Esophagus squamous epithelium (tissue), 5 donors: ENCODE measurements at regions of chr13 and their contacts with region 1.

Region 1: GRCh38 chr13:110412132-110412914 is 105.2 kb downstream of the COL4A2 start:
- DNase-seq: no peak
- H3K4me3 ChIP-seq: no peak overlapping the region
- H3K27ac ChIP-seq: peak overlapping the region; percentile 59 to 88 (median 86)
- H3K4me1 ChIP-seq: peaks cover 0 to 68% (median 44%) of the 10 kb centered on the region in 3 donors
- H3K27me3 ChIP-seq: no peaks in the 10 kb centered on the region
- CTCF ChIP-seq: peak; percentile 56 to 91 (median 84)
- POLR2A ChIP-seq: no peak

Region 2: GRCh38 chr13:110220471-110220870 is 191.9 kb before region 1 on chr13:
- intact Hi-C with region 1: loop called (anchors 5 kb)
- DNase-seq: no peak
- H3K4me3 ChIP-seq: no peak overlapping the region
- H3K27ac ChIP-seq: peak overlapping the region in 3 of 4 donors; percentile 82 to 90 (median 84)
- H3K4me1 ChIP-seq: peaks cover 6 to 50% (median 24%) of the 10 kb centered on the region in 3 donors
- H3K27me3 ChIP-seq: no peaks in the 10 kb centered on the region
- CTCF ChIP-seq: no peak
- POLR2A ChIP-seq: no peak

Region 3: GRCh38 chr13:110485603-110486002 is 73.3 kb after region 1 on chr13:
- intact Hi-C with region 1: no loop called
- DNase-seq: no peak
- H3K4me3 ChIP-seq: no peak overlapping the region
- H3K27ac ChIP-seq: no peak overlapping the region
- H3K4me1 ChIP-seq: no peaks in the 10 kb centered on the region
- H3K27me3 ChIP-seq: no peaks in the 10 kb centered on the region
- CTCF ChIP-seq: no peak
- POLR2A ChIP-seq: no peak

Region 4: GRCh38 chr13:110575322-110576069 is 163.2 kb after region 1 on chr13:
- intact Hi-C with region 1: no loop called
- DNase-seq: no peak
- H3K4me3 ChIP-seq: no peak overlapping the region
- H3K27ac ChIP-seq: no peak overlapping the region
- H3K4me1 ChIP-seq: peaks cover 0 to 4% (median 0%) of the 10 kb centered on the region in 3 donors
- H3K27me3 ChIP-seq: peaks cover 0 to 64% (median 0%) of the 10 kb centered on the region in 4 donors
- CTCF ChIP-seq: no peak
- POLR2A ChIP-seq: no peak